Adrenal gland (tissue), 19 donors: ENCODE measurements at regions of chr2 and their contacts with region 1.

Region 1: GRCh38 chr2:101823347-101823791 is 125.9 kb downstream of the MAP4K4 start:
- DNase-seq: peak; percentile 58 to 85 (median 71)
- H3K4me3 ChIP-seq: no peak overlapping the region
- H3K27ac ChIP-seq: no peak overlapping the region
- H3K4me1 ChIP-seq: no peaks in the 10 kb centered on the region
- H3K27me3 ChIP-seq: no peaks in the 10 kb centered on the region
- CTCF ChIP-seq: peak; percentile 59 to 68 (median 66)
- POLR2A ChIP-seq: no peak

Region 2: GRCh38 chr2:101697124-101698013 is 126.0 kb before region 1 on chr2 and contains the start of gene MAP4K4:
- intact Hi-C with region 1: loop called in 1 of 2 experiments (anchors 10 kb)
- DNase-seq: peak; percentile 64 to 83 (median 76)
- H3K4me3 ChIP-seq: peak within 1 kb of the TSS in 3 of 4 donors; percentile 36 to 91 (median 85)
- H3K27ac ChIP-seq: peak within 1 kb of the TSS in 4 of 5 donors; percentile 6 to 87 (median 42)
- H3K4me1 ChIP-seq: peaks cover 3 to 35% of the 10 kb centered on the region in 2 donors
- H3K27me3 ChIP-seq: no peaks in the 10 kb centered on the region
- CTCF ChIP-seq: peak in 1 of 6 experiments; percentile 26
- POLR2A ChIP-seq: peak in 1 of 2 donors; percentile 34
- total RNA-seq, gene MAP4K4: 11.6 to 43.1 (median 23.0) TPM

Region 3: GRCh38 chr2:101931404-101931803 is 108.0 kb after region 1 on chr2:
- intact Hi-C with region 1: no loop called
- DNase-seq: no peak
- H3K4me3 ChIP-seq: no peak overlapping the region
- H3K27ac ChIP-seq: no peak overlapping the region
- H3K4me1 ChIP-seq: no peaks in the 10 kb centered on the region
- H3K27me3 ChIP-seq: no peaks in the 10 kb centered on the region
- CTCF ChIP-seq: no peak
- POLR2A ChIP-seq: no peak

Region 4: GRCh38 chr2:102336502-102336945 is 513.2 kb after region 1 on chr2:
- intact Hi-C with region 1: no loop called
- DNase-seq: peak in 3 of 7 donors; percentile 26 to 37 (median 31)
- H3K4me3 ChIP-seq: no peak overlapping the region
- H3K27ac ChIP-seq: peak overlapping the region in 4 of 5 donors; percentile 14 to 84 (median 28)
- H3K4me1 ChIP-seq: peaks cover 0 to 8% of the 10 kb centered on the region in 2 donors
- H3K27me3 ChIP-seq: peaks cover 5% of the 10 kb centered on the region
- CTCF ChIP-seq: no peak
- POLR2A ChIP-seq: no peak